HepG2 (cell line): ENCODE measurements at regions of chr14 and their contacts with region 1.

Region 1: GRCh38 chr14:103889313-103890051 is 38.8 kb upstream of the TDRD9 start:
- DNase-seq: peak; percentile 50
- ATAC-seq: peak; percentile 58
- H3K4me3 ChIP-seq: peak overlapping the region; percentile 54 to 75 (median 60)
- H3K27ac ChIP-seq: peak overlapping the region; percentile 85
- H3K4me1 ChIP-seq: peaks cover 95% of the 10 kb centered on the region
- H3K27me3 ChIP-seq: no peaks in the 10 kb centered on the region
- CTCF ChIP-seq: 0 out of 2 replicates have a peak, but pooled peaks have one; percentile 7
- EP300 ChIP-seq: no peak
- POLR2A ChIP-seq: peak in 1 of 2 experiments; percentile 69; a peak in 2 of 4 replicates
- RAD21 ChIP-seq: no peak

Region 2: GRCh38 chr14:103847451-103848188 is 41.9 kb before region 1 on chr14 and contains the start of gene PPP1R13B:
- CTCF ChIA-PET with region 1: no interaction called
- POLR2A ChIA-PET with region 1: no interaction called
- in situ Hi-C with region 1: no loop called
- intact Hi-C with region 1: loop called (anchors 5 kb)
- DNase-seq: peak; percentile 78
- ATAC-seq: peak; percentile 80
- H3K4me3 ChIP-seq: peak within 1 kb of the TSS; percentile 83 to 92 (median 88)
- H3K27ac ChIP-seq: peak within 1 kb of the TSS; percentile 63
- H3K4me1 ChIP-seq: peaks cover 44% of the 10 kb centered on the region
- H3K27me3 ChIP-seq: no peaks in the 10 kb centered on the region; a peak in 1 of 5 replicates
- CTCF ChIP-seq: no peak
- EP300 ChIP-seq: no peak
- POLR2A ChIP-seq: peak in 1 of 2 experiments; percentile 82; a peak in 2 of 4 replicates
- RAD21 ChIP-seq: peak; percentile 59
- total RNA-seq, gene PPP1R13B: 5.3 and 9.4 TPM in 2 replicates

Region 3: DNA sequence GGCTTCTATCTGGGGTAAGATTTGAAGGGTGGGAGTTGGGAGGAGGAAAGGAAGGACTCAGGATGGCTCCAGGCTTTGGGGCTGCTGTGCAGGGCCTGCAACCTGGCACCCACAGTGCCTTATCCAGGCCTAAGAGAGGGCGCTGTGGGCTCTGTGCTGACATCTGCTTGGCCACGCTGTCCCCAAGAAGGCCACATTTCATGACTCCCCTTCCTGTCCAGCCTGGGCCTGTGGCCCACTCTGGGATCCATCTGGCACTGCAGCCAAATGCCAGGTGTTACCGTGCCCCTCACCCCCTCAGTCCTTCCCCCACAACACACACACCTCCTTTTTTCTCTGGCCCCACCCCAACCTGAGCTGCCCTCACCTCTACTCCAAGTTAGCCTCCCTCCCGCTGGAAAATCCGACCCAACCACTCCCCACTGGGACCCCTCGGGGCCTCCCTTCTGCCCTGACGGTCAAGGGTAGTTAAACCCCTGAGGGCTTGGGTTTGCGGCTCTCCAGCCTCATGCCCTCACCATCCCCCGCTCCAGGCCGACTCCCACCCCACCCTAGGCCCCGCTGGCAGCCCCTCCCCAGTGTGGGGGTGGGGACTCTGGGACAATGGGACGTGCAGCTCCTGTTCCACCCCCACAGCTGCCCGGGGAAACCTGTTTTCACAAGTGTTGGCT is 34.3 kb before region 1 on chr14:
- CTCF ChIA-PET with region 1: no interaction called
- POLR2A ChIA-PET with region 1: interaction called, 17 read pairs
- in situ Hi-C with region 1: no loop called
- intact Hi-C with region 1: no loop called
- DNase-seq: peak; percentile 55
- ATAC-seq: peak; percentile 86
- H3K4me3 ChIP-seq: peak overlapping the region; percentile 53 to 74 (median 59)
- H3K27ac ChIP-seq: peak overlapping the region; percentile 60
- H3K4me1 ChIP-seq: peaks cover 57% of the 10 kb centered on the region
- H3K27me3 ChIP-seq: 0 out of 5 replicates have a peak, but pooled peaks cover 0 to 4% of the 10 kb centered on the region in 2 experiments
- CTCF ChIP-seq: peak; percentile 66
- EP300 ChIP-seq: no peak
- POLR2A ChIP-seq: peak; percentile 34 to 49; a peak in 3 of 4 replicates
- RAD21 ChIP-seq: 0 out of 2 replicates have a peak, but pooled peaks have one; percentile 32

Region 4: DNA sequence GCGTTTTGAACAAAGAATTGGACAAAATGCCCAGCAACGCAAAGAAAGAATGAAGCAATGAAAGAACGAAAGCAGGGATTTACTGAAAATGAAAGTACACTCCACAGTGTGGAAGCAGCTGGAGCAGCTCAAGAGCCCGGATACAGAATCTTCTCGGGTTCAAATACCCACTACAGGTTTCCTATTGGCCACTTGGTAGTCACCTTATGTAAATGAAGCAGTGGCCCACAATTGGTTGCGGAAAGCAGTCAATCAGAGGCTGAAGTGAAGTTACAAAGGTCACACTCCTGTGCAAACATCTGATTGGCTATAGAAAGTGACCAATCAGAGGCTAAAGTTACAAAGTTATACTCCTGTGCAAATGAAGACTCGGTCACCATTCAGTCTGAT is 27.1 kb before region 1 on chr14:
- CTCF ChIA-PET with region 1: no interaction called
- POLR2A ChIA-PET with region 1: interaction called, 6 read pairs
- in situ Hi-C with region 1: no loop called
- intact Hi-C with region 1: loop called (anchors 2 kb)
- DNase-seq: peak; percentile 95
- ATAC-seq: peak; percentile 89
- H3K4me3 ChIP-seq: peak overlapping the region; percentile 48 to 66 (median 49); a peak in 5 of 6 replicates
- H3K27ac ChIP-seq: peak overlapping the region; percentile 41
- H3K4me1 ChIP-seq: peaks cover 58% of the 10 kb centered on the region
- H3K27me3 ChIP-seq: 0 out of 5 replicates have a peak, but pooled peaks cover 0 to 4% of the 10 kb centered on the region in 2 experiments
- CTCF ChIP-seq: no peak
- EP300 ChIP-seq: no peak
- POLR2A ChIP-seq: peak in 1 of 2 experiments; percentile 72; a peak in 3 of 4 replicates
- RAD21 ChIP-seq: no peak

Region 5: DNA sequence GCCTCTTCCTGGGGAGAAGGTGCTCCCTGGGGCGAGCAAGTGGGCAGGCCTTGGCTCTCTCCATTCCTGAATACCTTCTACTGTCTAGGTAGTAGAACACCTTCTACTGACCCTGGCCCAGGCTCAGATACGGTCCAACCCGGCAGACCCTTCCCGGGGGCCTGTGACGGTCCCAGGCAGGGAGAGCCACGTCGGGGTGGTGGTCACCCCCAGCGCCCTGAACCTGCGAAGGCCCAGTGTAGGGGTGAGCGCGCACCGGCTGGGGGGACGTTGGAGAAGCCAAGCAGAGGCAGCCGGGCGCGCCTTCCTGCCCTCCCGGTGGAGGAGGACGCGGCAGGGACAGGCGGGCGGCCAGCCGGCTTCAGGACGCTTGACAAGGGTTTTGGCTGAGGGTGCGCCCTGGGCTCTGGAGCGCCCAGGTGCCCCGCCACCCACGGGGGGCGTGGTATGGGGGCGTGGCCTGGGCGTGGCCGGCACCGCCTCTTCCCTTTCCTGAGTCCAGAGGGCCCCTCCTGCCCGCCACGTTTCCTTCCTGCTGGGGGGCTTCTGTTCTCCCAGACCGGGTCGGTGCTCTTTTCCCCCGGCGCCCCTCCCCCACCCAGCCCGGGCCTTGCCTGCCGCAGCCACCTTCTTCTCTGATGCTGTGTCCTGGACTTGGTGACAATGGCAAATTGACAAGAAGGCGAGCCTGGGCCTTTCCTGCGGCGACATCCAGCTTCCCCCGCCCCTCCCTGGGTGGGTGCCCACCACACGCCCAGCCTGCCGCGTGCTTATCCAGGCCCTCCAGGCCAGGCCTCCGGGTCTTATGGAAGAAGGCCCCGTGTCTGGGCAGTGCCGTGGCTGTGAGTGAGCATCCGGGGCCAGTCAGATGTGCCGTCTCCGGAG is 17.6 kb before region 1 on chr14:
- CTCF ChIA-PET with region 1: no interaction called
- POLR2A ChIA-PET with region 1: interaction called, 6 read pairs
- in situ Hi-C with region 1: no loop called
- intact Hi-C with region 1: loop called (anchors 1 kb)
- DNase-seq: no peak
- ATAC-seq: no peak
- H3K4me3 ChIP-seq: no peak overlapping the region
- H3K27ac ChIP-seq: peak overlapping the region; percentile 50
- H3K4me1 ChIP-seq: peaks cover 58% of the 10 kb centered on the region
- H3K27me3 ChIP-seq: no peaks in the 10 kb centered on the region
- CTCF ChIP-seq: no peak
- EP300 ChIP-seq: no peak
- POLR2A ChIP-seq: 0 out of 4 replicates have a peak, but pooled peaks of 1 of the 2 experiments have one; percentile 7
- RAD21 ChIP-seq: no peak